ENCODE measurements at regions of chr17 and their contacts with region 1.

Region 1: GRCh38 chr17:13576661-13577526 is 24.8 kb downstream of the HS3ST3A1 start:
- DNase-seq: no peak
- H3K4me3 ChIP-seq: no peak overlapping the region
- CTCF ChIP-seq: no peak

Region 2: DNA sequence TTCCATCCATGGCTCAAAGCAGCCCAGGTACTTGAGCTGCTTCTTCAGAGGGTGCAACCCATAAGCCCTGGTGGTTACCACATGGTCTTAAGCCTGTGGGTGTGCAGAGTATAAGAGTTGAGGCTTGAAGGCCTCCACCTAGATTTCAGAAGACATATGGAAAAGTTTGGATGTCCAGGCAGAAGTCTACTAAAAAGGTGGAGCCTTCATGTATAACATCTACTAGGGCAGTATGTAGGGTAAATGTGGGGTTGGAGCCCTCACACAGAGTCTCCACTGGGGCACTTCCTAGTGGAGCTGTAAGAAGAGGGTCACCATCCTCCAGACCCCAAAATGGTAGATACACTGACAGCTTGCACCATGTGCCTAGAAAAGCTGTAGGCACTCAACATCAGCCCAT is 96.0 kb before region 1 on chr17:
- in situ Hi-C with region 1: no loop called
- DNase-seq: no peak
- H3K4me3 ChIP-seq: no peak overlapping the region
- CTCF ChIP-seq: no peak

Region 3: DNA sequence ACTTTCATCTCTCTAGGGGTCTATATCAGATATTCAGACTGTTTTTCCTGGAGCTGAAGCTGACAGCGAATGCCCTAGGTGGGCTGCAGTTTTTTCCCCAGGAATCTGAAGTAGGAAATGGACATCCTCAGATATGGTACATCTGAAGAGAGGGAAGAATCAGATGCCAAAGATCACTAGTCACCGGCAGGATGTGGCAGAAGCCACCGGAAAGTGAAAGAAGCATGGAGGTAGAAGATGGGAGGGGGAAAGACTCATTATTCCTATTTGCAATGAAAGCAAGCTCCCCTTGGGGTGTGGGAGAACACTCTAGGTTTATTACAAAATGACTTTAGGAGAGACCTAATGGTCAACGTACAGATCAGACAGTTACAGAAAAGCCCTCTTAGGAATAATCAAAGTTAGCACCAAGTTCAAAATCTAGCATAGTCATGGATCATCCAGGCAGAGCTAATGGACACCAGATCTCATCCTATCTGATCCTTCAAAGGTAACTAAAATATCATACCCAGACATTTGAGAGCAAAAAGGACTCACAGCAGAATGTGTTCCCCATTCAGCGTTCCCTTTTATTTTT is 85.9 kb before region 1 on chr17:
- in situ Hi-C with region 1: loop called (anchors 5 kb)
- DNase-seq: no peak
- H3K4me3 ChIP-seq: no peak overlapping the region
- CTCF ChIP-seq: no peak

Measured in astrocyte of the cerebellum (primary cell).